CD8-positive, alpha-beta memory T cell (primary cell): ENCODE measurements at regions of chr7 and their contacts with region 1.

Region 1: GRCh38 chr7:2465928-2466327 is 10.3 kb downstream of the GRIFIN start:
- DNase-seq: no peak
- H3K4me3 ChIP-seq: no peak overlapping the region
- H3K4me3 Mint-ChIP-seq: no peak overlapping the region
- H3K27ac ChIP-seq: no peak overlapping the region
- H3K27ac Mint-ChIP-seq: no peak overlapping the region
- H3K4me1 ChIP-seq: no peaks in the 10 kb centered on the region
- H3K4me1 Mint-ChIP-seq: peaks cover 2 to 5% (median 4%) of the 10 kb centered on the region in 3 donors
- H3K27me3 ChIP-seq: no peaks in the 10 kb centered on the region
- H3K27me3 Mint-ChIP-seq: peaks cover 3 to 6% of the 10 kb centered on the region in 2 donors

Region 2: GRCh38 chr7:2359610-2360009 is 106.3 kb before region 1 on chr7:
- CTCF ChIA-PET with region 1: no interaction called
- POLR2A ChIA-PET with region 1: interaction called, 21 read pairs
- DNase-seq: no peak
- H3K4me3 ChIP-seq: no peak overlapping the region
- H3K4me3 Mint-ChIP-seq: peak overlapping the region in 3 of 7 donors; percentile 25 to 85 (median 48)
- H3K27ac ChIP-seq: no peak overlapping the region
- H3K27ac Mint-ChIP-seq: peak overlapping the region in 3 of 8 donors; percentile 61 to 82 (median 71)
- H3K4me1 ChIP-seq: peaks cover 45% of the 10 kb centered on the region
- H3K4me1 Mint-ChIP-seq: peaks cover 35 to 51% (median 41%) of the 10 kb centered on the region in 3 donors
- H3K27me3 ChIP-seq: no peaks in the 10 kb centered on the region
- H3K27me3 Mint-ChIP-seq: no peaks in the 10 kb centered on the region

Region 3: DNA sequence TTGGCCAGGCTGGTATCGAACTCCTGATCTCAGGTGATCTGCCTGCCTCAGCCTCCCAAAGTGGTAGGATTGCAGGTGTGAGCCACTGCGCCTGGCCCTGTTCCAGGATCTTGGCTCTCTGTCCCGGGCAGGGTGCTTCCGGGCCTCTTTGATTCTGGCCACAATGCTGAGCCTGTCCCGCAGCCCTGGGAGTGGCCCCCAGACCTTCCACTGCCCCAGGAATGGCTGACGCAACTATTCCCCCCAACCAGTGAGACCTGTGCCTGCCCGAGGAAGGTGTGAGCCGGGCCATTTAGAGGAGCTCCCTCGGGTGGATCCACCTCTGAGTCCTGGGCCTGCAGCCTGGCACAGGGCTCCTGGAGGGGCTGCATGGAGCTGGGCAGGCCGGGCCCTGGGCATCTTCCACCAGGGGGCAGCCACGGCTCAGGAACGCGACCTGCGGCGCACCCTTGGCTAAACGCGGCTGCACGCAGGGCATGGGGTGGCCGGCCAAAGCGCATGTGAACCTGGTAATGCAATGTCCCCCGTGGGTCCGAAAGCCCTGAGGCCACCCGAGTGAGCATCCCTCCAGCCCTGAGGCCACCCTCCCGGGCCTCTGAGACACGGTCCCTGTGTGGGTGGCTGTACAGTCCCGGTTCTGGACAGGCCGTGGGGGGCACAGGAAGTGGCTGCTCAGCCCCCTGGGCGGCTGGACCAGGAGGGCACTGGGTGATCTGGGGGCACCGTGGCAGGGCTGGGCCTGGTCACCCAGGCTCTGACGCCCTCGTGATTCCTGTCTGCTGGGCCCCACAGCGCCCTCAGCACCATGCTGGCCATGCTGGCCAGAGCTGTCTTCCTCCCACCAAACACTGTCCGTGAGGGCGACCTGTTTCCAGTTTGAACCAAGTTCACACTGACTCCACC is 14.5 kb before region 1 on chr7:
- CTCF ChIA-PET with region 1: interaction called, 43 read pairs
- POLR2A ChIA-PET with region 1: interaction called, 3 read pairs
- DNase-seq: peak; percentile 59 to 78 (median 67)
- H3K4me3 ChIP-seq: peak overlapping the region; percentile 59
- H3K4me3 Mint-ChIP-seq: peak overlapping the region in 6 of 7 donors; percentile 58 to 84 (median 68)
- H3K27ac ChIP-seq: no peak overlapping the region
- H3K27ac Mint-ChIP-seq: peak overlapping the region in 5 of 8 donors; percentile 22 to 82 (median 53)
- H3K4me1 ChIP-seq: peaks cover 9% of the 10 kb centered on the region
- H3K4me1 Mint-ChIP-seq: peaks cover 4 to 17% (median 10%) of the 10 kb centered on the region in 3 donors
- H3K27me3 ChIP-seq: no peaks in the 10 kb centered on the region
- H3K27me3 Mint-ChIP-seq: no peaks in the 10 kb centered on the region

Region 4: GRCh38 chr7:2732959-2733584 is 267.1 kb after region 1 on chr7:
- CTCF ChIA-PET with region 1: no interaction called
- POLR2A ChIA-PET with region 1: no interaction called
- DNase-seq: no peak
- H3K4me3 ChIP-seq: no peak overlapping the region
- H3K4me3 Mint-ChIP-seq: no peak overlapping the region
- H3K27ac ChIP-seq: peak overlapping the region; percentile 35
- H3K27ac Mint-ChIP-seq: peak overlapping the region in 1 of 8 donors; percentile 50
- H3K4me1 ChIP-seq: no peaks in the 10 kb centered on the region
- H3K4me1 Mint-ChIP-seq: peaks cover 0 to 38% (median 6%) of the 10 kb centered on the region in 3 donors
- H3K27me3 ChIP-seq: no peaks in the 10 kb centered on the region
- H3K27me3 Mint-ChIP-seq: peaks cover 0 to 2% of the 10 kb centered on the region in 2 donors